PC-9 (cell line): ENCODE measurements at regions of chr11 and their contacts with region 1.

Region 1: DNA sequence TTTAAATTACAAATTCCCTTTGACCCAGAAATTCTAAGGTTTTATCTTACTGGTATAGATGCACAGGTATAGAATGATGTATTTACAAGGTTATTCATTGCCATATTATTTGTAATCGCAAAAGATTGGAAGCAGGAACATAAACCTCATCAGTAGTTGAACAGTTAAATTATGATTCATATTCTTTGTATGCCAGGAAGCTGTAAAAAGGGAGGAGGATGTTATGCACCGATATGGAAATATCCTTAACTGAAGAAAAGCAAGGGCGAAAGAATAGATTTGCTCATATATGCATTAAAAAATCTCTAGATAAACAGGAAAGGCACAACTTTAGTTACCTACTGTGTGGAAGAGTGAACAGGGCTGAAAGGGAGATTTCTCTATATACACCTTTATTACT is 36.7 kb downstream of the PPFIA1 start:
- DNase-seq: peak in 1 of 2 experiments; percentile 71
- H3K4me3 ChIP-seq: no peak overlapping the region
- H3K27ac ChIP-seq: peak overlapping the region; percentile 71
- H3K4me1 ChIP-seq: peaks cover 53% of the 10 kb centered on the region
- H3K27me3 ChIP-seq: no peaks in the 10 kb centered on the region
- CTCF ChIP-seq: no peak

Region 2: GRCh38 chr11:70128435-70128906 is 178.7 kb before region 1 on chr11:
- CTCF ChIA-PET with region 1: interaction called, 17 read pairs
- POLR2A ChIA-PET with region 1: no interaction called
- intact Hi-C with region 1: no loop called
- DNase-seq: peak; percentile 51 to 78
- H3K4me3 ChIP-seq: no peak overlapping the region
- H3K27ac ChIP-seq: peak overlapping the region; percentile 18; the same call in 1 of the 2 replicates
- H3K4me1 ChIP-seq: peaks cover 22% of the 10 kb centered on the region
- H3K27me3 ChIP-seq: no peaks in the 10 kb centered on the region
- CTCF ChIP-seq: 0 out of 2 replicates have a peak, but pooled peaks have one; percentile 26

Region 3: GRCh38 chr11:70270104-70270876 is 36.9 kb before region 1 on chr11 and contains the start of gene PPFIA1:
- CTCF ChIA-PET with region 1: no interaction called
- POLR2A ChIA-PET with region 1: no interaction called
- intact Hi-C with region 1: loop called (anchors 2 kb)
- DNase-seq: peak; percentile 90 to 99
- H3K4me3 ChIP-seq: peak within 1 kb of the TSS; percentile 85
- H3K27ac ChIP-seq: peak within 1 kb of the TSS; percentile 31
- H3K4me1 ChIP-seq: peaks cover 25% of the 10 kb centered on the region
- H3K27me3 ChIP-seq: no peaks in the 10 kb centered on the region
- CTCF ChIP-seq: no peak
- total RNA-seq, gene PPFIA1: 81.1 and 86.8 TPM in 2 replicates